Upper lobe of right lung (tissue), 1 donor: ENCODE measurements at regions of chr4 and their contacts with region 1.

Region 1: DNA sequence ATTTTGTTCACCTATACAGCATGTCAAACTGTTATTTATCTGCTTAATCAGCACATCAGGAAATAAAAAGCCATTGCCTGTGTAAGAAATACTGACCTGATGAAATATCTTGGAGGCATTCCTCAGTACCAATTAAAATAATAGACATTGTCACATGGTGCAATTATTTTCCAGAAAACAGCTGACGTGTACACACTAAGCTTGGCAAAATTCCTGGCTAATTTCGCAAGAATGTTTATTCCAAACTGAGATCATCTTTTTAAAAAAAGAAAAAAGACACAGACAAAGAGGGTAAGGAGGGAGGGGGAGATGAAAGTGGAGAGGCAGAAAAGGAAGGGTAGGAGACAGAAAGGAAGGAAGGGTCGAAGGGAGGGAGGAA is 61.9 kb upstream of the NFKB1 start:
- DNase-seq: no peak
- ATAC-seq: peak; percentile 48
- H3K4me3 ChIP-seq: no peak overlapping the region
- H3K27ac ChIP-seq: peak overlapping the region; percentile 32
- H3K4me1 ChIP-seq: peaks cover 11% of the 10 kb centered on the region
- H3K27me3 ChIP-seq: no peaks in the 10 kb centered on the region
- CTCF ChIP-seq: no peak

Region 2: GRCh38 chr4:103099691-103100392 is 660.6 kb after region 1 on chr4 and contains the start of gene BDH2:
- intact Hi-C with region 1: loop called (anchors 10 kb)
- DNase-seq: no peak
- ATAC-seq: peak; percentile 98
- H3K4me3 ChIP-seq: peak within 1 kb of the TSS; percentile 66
- H3K27ac ChIP-seq: peak within 1 kb of the TSS; percentile 86
- H3K4me1 ChIP-seq: peaks cover 17% of the 10 kb centered on the region
- H3K27me3 ChIP-seq: no peaks in the 10 kb centered on the region
- CTCF ChIP-seq: peak; percentile 81
- total RNA-seq, gene BDH2: 56.6 TPM